ENCODE measurements at regions of chr1 and their contacts with region 1.

Region 1: DNA sequence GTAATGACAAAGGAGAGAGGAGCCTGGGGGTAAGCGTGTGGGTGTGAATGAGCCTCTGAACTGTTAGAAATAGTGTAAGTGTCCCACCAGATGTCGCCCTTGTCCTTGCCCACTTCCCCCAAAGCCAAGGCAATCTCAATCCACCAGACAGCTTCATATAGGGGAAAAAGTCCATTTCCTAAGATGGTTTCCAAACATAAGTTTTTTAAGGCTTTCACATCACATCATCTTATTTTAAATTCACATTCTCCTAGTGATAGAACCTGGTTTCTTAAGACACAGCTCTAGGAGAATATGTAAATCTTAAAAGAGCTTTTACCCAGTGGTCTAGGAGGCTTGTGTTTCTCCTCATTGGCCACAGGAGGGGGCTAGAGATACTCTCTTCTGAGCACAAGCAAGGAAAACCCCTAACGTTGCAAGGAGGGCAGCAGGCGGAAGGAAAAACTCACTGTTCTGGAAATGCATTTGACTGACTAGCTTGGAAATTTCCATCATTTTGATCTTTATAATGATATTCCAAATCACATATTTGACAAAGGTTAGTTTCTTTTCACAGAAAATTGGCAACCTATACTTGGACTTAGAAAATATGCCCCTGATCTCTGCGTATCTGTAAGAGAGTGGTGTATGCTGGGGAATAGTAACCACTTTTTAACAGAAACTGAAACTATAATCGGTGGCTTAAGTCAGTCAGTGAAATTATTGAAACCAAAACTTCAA is 51.9 kb upstream of the LPAR3 start:
- DNase-seq: peak; percentile 81
- H3K4me3 ChIP-seq: peak overlapping the region in 2 of 3 experiments; percentile 35 to 42
- H3K27ac ChIP-seq: peak overlapping the region; percentile 66
- H3K4me1 ChIP-seq: peaks cover 29% of the 10 kb centered on the region
- H3K27me3 ChIP-seq: no peaks in the 10 kb centered on the region
- CTCF ChIP-seq: peak; percentile 76 to 93

Region 2: DNA sequence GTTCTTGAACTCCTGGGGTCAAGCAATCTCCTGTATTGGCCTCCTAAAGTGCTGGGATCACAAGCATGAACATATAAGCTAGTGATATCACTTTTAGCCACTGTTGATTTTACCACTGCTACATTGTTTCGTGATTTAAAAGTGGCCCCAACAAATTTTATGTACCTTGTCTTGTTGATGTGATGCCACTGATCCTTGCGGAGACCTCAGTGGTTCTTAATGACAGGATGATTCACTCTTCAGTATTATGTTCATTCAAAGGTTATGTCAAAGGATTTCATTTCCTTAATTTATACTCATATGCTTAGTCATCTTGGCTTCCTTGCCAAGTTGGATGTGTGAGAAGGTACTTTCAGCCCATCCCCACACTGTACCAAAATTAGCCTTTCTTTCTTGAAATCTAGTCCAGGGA is 788.7 kb before region 1 on chr1:
- CTCF ChIA-PET with region 1: no interaction called
- dilution Hi-C with region 1: no loop called
- in situ Hi-C with region 1: loop called in 1 of 2 experiments (anchors 25 kb)
- intact Hi-C with region 1: no loop called
- DNase-seq: peak; percentile 80
- H3K4me3 ChIP-seq: no peak overlapping the region
- H3K27ac ChIP-seq: no peak overlapping the region
- H3K4me1 ChIP-seq: peaks cover 5% of the 10 kb centered on the region
- H3K27me3 ChIP-seq: no peaks in the 10 kb centered on the region
- CTCF ChIP-seq: no peak

Region 3: DNA sequence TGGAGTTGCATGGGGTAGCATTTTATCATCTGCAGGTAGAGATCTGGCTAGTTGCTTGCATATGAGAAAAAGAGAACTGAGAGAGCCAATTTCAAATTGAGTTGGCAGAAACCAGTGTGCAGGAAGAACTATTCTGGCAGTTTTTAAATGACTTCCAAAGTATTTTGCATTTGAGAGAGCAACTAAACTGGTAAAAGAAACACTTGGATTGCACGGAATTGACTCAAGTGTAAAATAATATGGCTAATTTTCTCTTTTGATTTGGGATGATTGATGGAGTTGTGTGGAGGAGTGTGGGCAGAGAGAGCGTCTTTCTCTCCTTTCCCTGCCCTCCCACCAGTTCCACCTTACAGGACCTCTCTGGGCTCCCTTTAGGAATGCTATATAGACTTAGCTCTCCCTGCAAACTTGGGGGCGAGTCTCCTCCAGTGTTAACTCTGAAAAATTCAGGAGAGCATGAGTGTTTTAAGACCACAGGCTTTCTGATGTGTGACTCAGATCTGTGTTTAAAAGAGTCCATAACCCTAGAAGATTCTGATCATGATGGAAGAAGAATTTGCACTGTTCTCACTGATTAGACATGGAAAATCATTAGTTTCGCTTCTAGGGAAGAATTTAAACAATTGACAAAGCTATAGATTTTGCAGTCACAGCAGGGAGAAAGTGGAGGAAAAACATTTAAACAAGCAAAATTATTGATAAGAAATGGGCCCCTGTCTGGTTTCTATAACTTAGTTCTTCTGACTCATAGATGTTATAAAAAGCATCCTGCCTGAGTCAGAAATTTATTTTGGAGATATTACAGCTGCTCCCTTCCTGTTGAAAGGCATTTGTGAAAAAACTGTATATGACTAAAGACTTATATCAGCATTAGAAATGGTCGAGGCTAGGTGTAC is 345.8 kb before region 1 on chr1:
- CTCF ChIA-PET with region 1: no interaction called
- dilution Hi-C with region 1: no loop called
- in situ Hi-C with region 1: no loop called
- intact Hi-C with region 1: no loop called
- DNase-seq: peak; percentile 85
- H3K4me3 ChIP-seq: no peak overlapping the region
- H3K27ac ChIP-seq: peak overlapping the region; percentile 67
- H3K4me1 ChIP-seq: peaks cover 27% of the 10 kb centered on the region
- H3K27me3 ChIP-seq: no peaks in the 10 kb centered on the region
- CTCF ChIP-seq: no peak

Region 4: DNA sequence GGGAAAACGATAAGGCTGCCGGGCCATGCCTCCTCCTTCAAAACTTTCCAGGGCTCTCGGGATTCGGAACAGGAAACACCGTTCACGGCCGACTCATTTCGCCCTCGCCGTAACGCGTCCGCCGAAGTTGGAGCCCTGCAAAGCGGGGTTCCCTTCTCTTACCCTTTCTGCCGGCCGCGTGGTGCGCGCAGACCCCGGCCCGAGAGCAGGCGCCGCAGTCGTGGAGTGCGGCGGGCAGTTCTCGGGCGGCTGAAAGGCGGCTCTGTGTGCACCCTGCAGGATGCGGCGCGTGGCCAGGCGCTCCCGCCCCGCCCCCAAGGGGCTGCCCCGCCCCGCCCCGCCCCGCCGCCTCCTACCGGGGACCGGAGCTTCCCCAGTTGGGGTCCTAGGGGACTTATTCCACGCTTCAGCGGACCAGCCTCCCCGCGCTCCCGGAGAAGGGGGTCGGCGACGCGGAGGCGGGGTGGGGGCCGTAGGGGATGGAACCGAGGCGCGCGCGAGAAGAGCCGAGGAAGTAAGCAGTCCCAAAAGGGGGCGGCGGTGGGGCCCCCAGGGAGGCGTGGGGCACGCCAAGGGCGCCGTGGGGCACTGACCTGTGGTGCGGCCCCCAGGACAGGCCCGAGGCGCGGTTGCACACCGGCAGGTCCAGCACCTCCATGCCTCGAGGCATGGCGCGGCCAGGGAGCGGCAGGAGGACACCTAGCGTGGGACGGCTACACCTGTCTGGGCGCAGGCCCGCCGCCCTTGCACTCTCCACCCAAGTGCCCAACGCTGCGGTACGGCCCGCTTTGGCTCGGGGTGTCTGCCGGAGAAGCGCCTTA is 52.1 kb after region 1 on chr1 and contains the start of gene MCOLN2:
- CTCF ChIA-PET with region 1: interaction called, 5 read pairs
- dilution Hi-C with region 1: no loop called
- in situ Hi-C with region 1: no loop called
- intact Hi-C with region 1: loop called (anchors 2 kb)
- DNase-seq: peak; percentile 37
- H3K4me3 ChIP-seq: peak within 1 kb of the TSS; percentile 57 to 90 (median 81)
- H3K27ac ChIP-seq: no peak within 1 kb of the TSS
- H3K4me1 ChIP-seq: peaks cover 14% of the 10 kb centered on the region
- H3K27me3 ChIP-seq: peaks cover 2% of the 10 kb centered on the region
- CTCF ChIP-seq: no peak
- total RNA-seq, gene MCOLN2: 1.2 to 1.6 TPM

Region 5: DNA sequence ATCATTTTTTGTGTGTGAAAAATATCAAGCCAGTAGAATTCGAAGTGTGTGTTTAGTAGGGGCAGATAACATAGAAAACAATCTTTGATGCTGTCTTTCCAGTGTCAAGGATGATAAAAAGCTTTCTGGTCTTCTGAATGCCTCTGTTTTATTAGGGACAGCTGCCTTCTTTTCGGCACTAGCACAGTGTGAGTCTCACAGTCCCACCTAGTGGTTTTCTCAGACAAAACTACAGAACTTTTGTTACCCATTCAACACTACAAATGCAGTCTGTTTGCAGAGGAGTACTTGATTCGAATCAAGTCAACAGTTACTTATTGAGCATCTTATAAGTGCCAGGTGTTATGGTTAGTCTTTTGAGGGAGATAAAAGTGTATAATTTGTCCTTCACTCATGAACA is 134.0 kb after region 1 on chr1:
- CTCF ChIA-PET with region 1: interaction called, 6 read pairs
- dilution Hi-C with region 1: no loop called
- in situ Hi-C with region 1: no loop called
- intact Hi-C with region 1: loop called (anchors 1 kb)
- DNase-seq: no peak
- H3K4me3 ChIP-seq: no peak overlapping the region
- H3K27ac ChIP-seq: no peak overlapping the region
- H3K4me1 ChIP-seq: no peaks in the 10 kb centered on the region
- H3K27me3 ChIP-seq: no peaks in the 10 kb centered on the region
- CTCF ChIP-seq: peak in 1 of 2 donors; percentile 15

Region 6: DNA sequence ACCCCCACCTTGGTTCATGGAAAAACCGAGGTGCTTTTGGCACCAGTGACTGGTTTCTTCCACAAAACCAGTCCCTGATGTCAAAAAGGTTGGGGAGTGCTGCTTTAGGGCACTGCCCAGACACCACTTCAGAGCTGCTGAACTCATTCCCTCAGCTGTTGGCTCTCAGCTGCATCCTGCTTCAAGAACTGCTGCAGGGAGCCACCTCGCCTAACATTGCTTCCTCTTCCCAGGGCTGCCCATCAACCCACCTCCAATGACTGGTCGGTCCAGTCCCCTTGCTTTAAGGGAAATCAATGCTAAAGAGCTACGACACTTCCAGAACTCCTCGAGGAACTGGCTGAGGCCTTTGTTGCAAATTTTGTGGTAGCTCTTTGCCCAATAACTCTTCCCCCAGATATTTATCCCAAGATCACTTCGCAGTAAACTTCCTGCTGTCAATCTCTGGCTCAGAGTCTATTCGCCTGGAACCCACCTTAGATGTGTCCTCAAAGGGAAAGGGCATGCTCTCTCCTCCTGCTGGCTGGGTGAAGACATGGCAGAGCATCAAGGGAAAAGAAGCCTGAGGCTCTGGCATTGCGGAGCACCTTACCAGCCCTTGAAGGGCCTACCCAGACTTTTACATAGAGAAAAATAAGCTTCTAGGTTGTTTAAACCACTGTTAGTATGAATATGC is 285.5 kb after region 1 on chr1:
- CTCF ChIA-PET with region 1: interaction called, 3 read pairs
- dilution Hi-C with region 1: no loop called
- in situ Hi-C with region 1: loop called in 1 of 2 experiments (anchors 10 kb)
- intact Hi-C with region 1: no loop called
- DNase-seq: no peak
- H3K4me3 ChIP-seq: no peak overlapping the region
- H3K27ac ChIP-seq: no peak overlapping the region
- H3K4me1 ChIP-seq: peaks cover 8% of the 10 kb centered on the region
- H3K27me3 ChIP-seq: no peaks in the 10 kb centered on the region
- CTCF ChIP-seq: peak; percentile 3 to 32

Region 7: DNA sequence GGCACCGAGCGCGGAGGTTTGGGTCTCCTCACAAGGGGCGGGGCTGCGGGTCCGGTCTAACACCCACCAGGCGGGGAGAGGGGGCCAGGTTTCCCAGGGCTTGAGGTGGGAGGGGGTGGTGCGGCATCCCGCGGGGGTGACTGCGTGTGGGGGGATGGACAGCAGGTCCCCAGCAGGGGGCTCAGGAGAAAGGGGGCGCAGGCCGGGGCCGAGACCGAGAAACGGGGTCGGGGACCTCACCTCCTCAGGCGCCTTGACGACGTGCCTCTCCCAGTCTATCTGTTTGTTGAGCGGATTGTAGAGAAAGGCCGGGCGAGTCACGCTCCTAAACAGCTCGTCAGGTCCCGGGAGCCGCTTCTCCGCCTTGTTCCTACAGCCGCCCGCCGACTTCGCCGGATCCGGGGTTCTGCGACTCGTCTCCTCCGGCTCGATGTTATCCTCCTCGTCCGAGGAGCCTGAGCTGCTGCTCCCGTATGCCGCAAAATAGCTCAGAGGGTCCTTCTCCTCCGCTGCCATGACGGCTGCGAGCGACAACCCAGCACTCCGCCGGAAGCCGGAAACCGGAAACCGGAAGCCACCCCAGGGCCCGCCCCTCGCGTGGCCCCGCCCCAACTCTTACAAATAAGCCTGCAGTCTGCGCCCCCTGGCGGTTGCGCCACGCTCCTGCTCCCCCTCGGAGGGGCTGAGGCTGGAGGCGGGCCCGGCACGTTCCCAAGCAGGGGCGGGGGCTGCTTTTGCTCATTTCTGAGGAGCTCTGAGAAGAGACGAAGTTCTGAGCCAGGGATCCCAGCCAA is 314.4 kb after region 1 on chr1 and contains the start of gene C1orf52:
- CTCF ChIA-PET with region 1: interaction called, 13 read pairs
- dilution Hi-C with region 1: no loop called
- in situ Hi-C with region 1: loop called in 1 of 2 experiments (anchors 5 kb)
- intact Hi-C with region 1: loop called (anchors 1 kb)
- DNase-seq: peak; percentile 81
- H3K4me3 ChIP-seq: peak within 1 kb of the TSS; percentile 74 to 96 (median 96)
- H3K27ac ChIP-seq: peak within 1 kb of the TSS; percentile 72
- H3K4me1 ChIP-seq: peaks cover 4% of the 10 kb centered on the region
- H3K27me3 ChIP-seq: no peaks in the 10 kb centered on the region
- CTCF ChIP-seq: peak; percentile 71 to 92
- total RNA-seq, gene C1orf52: 13.7 to 25.7 TPM